ENCODE measurements at regions of chr19 and their contacts with region 1.

Region 1: GRCh38 chr19:43595999-43596841 is at the starts of genes IRGQ and ZNF576:
- DNase-seq: peak; percentile 100
- H3K4me3 Mint-ChIP-seq: peak within 1 kb of the TSS; percentile 94
- H3K27ac Mint-ChIP-seq: peak within 1 kb of the TSS; percentile 98
- H3K4me1 Mint-ChIP-seq: peaks cover 30% of the 10 kb centered on the region
- H3K27me3 Mint-ChIP-seq: no peaks in the 10 kb centered on the region
- total RNA-seq, gene IRGQ: 18.3 to 19.9 TPM
- total RNA-seq, gene ZNF576: 12.6 to 14.1 TPM

Region 2: DNA sequence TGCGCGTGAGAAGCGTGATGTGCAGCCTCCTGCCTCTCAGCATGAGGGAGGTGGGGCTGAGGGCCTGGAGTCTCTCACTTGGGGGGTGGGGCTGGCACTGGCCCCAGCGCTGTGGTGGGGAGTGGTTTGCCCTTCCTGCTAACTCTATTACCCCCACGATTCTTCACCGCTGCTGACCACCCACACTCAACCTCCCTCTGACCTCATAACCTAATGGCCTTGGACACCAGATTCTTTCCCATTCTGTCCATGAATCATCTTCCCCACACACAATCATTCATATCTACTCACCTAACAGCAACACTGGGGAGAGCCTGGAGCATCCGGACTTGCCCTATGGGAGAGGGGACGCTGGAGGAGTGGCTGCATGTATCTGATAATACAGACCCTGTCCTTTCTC is 234.0 kb before region 1 on chr19:
- CTCF ChIA-PET with region 1: no interaction called
- POLR2A ChIA-PET with region 1: no interaction called
- intact Hi-C with region 1: no loop called
- DNase-seq: no peak
- H3K4me3 Mint-ChIP-seq: no peak overlapping the region
- H3K27ac Mint-ChIP-seq: no peak overlapping the region
- H3K4me1 Mint-ChIP-seq: no peaks in the 10 kb centered on the region
- H3K27me3 Mint-ChIP-seq: peaks cover 2% of the 10 kb centered on the region

Region 3: GRCh38 chr19:43503501-43504425 is 92.5 kb before region 1 on chr19:
- CTCF ChIA-PET with region 1: interaction called, 17 read pairs
- POLR2A ChIA-PET with region 1: interaction called, 3 read pairs
- intact Hi-C with region 1: no loop called
- DNase-seq: peak; percentile 99
- H3K4me3 Mint-ChIP-seq: peak overlapping the region; percentile 94
- H3K27ac Mint-ChIP-seq: peak overlapping the region; percentile 95
- H3K4me1 Mint-ChIP-seq: peaks cover 23% of the 10 kb centered on the region
- H3K27me3 Mint-ChIP-seq: no peaks in the 10 kb centered on the region

Region 4: DNA sequence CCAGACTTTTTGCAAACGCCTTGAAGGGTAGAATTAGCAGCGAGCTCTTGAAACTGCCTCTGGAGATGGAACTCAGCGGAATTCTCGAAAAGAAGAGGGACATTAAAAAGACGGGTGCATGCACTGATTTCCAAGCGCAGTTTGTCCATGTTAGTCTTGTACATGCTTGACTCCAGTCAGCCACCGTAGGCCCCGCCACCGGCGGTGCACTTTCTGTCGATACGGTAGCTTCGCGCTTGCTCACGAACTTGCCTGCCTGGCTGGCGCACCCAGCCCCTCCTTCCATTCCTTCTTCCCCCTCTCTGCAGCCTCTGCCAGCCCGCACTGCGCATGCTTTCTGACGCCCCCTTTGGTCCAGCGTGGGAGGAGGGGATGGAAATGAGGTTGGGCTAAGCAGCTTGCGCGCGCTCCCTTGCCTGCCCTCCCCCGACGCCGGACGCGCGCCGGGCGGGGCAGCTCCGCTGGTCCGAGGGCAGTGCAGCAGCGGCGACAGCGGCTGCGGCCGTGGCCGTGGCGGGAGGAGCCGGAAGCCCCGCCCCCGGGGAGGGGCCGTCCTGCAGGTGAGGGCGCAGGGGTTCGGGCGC is 63.2 kb before region 1 on chr19 and contains the start of gene ZNF575:
- CTCF ChIA-PET with region 1: interaction called, 17 read pairs
- POLR2A ChIA-PET with region 1: interaction called, 14 read pairs
- intact Hi-C with region 1: loop called (anchors 1 kb)
- DNase-seq: peak; percentile 95
- H3K4me3 Mint-ChIP-seq: peak within 1 kb of the TSS; percentile 82
- H3K27ac Mint-ChIP-seq: peak within 1 kb of the TSS; percentile 94
- H3K4me1 Mint-ChIP-seq: peaks cover 21% of the 10 kb centered on the region
- H3K27me3 Mint-ChIP-seq: no peaks in the 10 kb centered on the region
- total RNA-seq, gene ZNF575: 3.1 to 3.7 TPM

Region 5: GRCh38 chr19:43570174-43570791 is 25.9 kb before region 1 on chr19:
- CTCF ChIA-PET with region 1: interaction called, 56 read pairs
- POLR2A ChIA-PET with region 1: interaction called, 17 read pairs
- intact Hi-C with region 1: loop called (anchors 1 kb)
- DNase-seq: no peak
- H3K4me3 Mint-ChIP-seq: no peak overlapping the region
- H3K27ac Mint-ChIP-seq: no peak overlapping the region
- H3K4me1 Mint-ChIP-seq: peaks cover 27% of the 10 kb centered on the region
- H3K27me3 Mint-ChIP-seq: no peaks in the 10 kb centered on the region

Region 6: DNA sequence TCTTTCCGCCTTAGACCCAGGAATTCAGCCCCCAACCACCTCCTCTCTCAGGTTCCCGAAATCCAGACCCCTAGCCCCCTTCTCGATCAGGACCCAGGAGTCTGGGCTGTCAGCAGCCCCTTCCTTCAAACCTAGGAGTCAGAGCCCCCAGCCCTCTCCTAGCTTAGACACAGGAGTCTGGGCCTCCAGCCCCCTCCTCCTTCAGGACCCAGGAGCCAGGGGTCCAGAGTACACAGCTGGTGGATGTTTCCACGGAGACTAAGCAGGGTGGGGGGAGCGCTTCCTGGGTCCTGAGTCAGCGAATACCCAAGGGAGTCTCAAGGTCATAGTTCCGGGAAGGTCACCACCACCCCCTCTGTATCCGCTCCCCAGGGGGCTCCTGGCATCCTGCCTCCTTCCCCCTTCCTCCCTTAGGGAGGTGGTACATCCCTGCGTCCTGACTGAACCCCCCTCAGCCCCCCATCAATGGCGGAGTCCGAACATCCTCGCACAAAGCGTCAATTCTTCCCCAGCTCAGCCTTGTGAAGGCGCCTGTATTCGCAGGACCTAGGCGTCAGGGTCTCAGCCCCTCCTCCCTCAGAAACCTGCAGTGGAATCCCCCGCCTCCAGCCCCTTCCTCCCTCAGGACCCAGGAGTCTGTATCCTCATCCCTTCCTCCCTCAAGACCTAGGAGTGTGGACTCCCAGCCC is 38.8 kb after region 1 on chr19:
- CTCF ChIA-PET with region 1: no interaction called
- POLR2A ChIA-PET with region 1: no interaction called
- intact Hi-C with region 1: no loop called
- DNase-seq: no peak
- H3K4me3 Mint-ChIP-seq: no peak overlapping the region
- H3K27ac Mint-ChIP-seq: no peak overlapping the region
- H3K4me1 Mint-ChIP-seq: peaks cover 7% of the 10 kb centered on the region
- H3K27me3 Mint-ChIP-seq: peaks cover 20% of the 10 kb centered on the region

Region 7: DNA sequence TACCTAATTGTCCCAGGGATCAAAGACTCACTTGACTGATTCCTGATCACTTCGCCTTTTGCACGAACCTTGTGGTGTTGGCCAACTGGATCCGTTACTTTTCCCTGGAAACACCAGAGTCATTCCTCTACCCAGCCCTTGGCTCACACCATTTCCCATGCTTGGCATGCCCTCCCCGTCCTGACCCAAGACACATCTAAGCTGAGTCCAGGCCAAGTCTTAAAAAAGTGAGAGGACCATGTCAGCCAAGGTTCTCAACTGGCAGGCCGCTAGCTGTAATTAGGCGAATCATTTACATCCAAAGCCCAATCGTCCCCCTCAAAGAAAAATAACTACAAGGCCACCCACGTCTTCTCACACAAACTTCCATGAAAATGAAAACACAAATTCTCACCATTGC is 62.3 kb after region 1 on chr19:
- CTCF ChIA-PET with region 1: no interaction called
- POLR2A ChIA-PET with region 1: no interaction called
- intact Hi-C with region 1: no loop called
- DNase-seq: no peak
- H3K4me3 Mint-ChIP-seq: no peak overlapping the region
- H3K27ac Mint-ChIP-seq: no peak overlapping the region
- H3K4me1 Mint-ChIP-seq: peaks cover 3% of the 10 kb centered on the region
- H3K27me3 Mint-ChIP-seq: no peaks in the 10 kb centered on the region

Region 8: GRCh38 chr19:43668406-43669158 is 72.4 kb after region 1 on chr19:
- CTCF ChIA-PET with region 1: interaction called, 4 read pairs
- POLR2A ChIA-PET with region 1: interaction called, 4 read pairs
- intact Hi-C with region 1: loop called (anchors 2 kb)
- DNase-seq: peak; percentile 98
- H3K4me3 Mint-ChIP-seq: peak overlapping the region; percentile 81
- H3K27ac Mint-ChIP-seq: peak overlapping the region; percentile 63
- H3K4me1 Mint-ChIP-seq: peaks cover 41% of the 10 kb centered on the region
- H3K27me3 Mint-ChIP-seq: no peaks in the 10 kb centered on the region

Region 9: DNA sequence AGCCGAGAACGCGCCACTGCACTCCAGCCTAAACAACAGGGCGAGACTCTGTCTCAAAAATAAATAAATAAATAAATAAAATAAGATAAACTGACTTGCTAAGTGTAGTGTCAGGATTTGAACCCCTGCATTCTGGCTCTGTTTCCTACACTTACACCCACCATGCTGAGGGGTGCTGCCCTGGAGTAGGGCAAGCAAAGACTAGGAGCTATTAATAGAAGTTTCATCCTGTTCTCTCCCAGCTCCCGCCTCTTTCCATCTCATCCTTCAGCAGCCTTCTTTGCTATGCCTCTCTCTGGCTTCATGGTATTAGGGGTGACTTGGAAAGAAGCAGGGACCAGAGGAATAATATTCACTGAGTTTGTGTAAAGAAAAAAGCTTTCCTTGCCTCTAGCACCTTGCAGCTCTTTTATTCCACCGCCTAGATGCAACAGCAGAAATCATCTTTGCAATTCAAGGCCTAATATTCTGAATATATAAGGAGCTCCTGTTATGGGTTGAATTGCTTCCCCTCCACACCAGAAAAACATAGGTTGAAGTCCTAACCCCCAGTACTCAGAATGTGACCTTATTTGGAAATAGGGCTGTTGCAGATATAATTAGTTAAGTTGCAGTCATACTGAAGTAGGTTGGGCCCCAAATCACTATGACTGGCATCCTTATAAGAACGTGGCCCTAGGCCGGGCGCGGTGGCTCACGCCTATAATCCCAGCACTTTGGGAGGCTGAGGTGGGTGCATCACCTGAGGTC is 82.5 kb after region 1 on chr19:
- CTCF ChIA-PET with region 1: no interaction called
- POLR2A ChIA-PET with region 1: no interaction called
- intact Hi-C with region 1: no loop called
- DNase-seq: no peak
- H3K4me3 Mint-ChIP-seq: no peak overlapping the region
- H3K27ac Mint-ChIP-seq: no peak overlapping the region
- H3K4me1 Mint-ChIP-seq: peaks cover 11% of the 10 kb centered on the region
- H3K27me3 Mint-ChIP-seq: no peaks in the 10 kb centered on the region

Measured in activated CD4-positive, alpha-beta memory T cell treated with anti-CD3 and anti-CD28 coated beads for 36 hours (primary cell).